Colonic mucosa (tissue), 4 donors: ENCODE measurements at regions of chr18 and their contacts with region 1.

Region 1: GRCh38 chr18:54679318-54680149 is 88.5 kb downstream of the DYNAP start:
- DNase-seq: peak; percentile 25
- H3K4me3 ChIP-seq: no peak overlapping the region
- H3K27ac ChIP-seq: no peak overlapping the region
- H3K4me1 ChIP-seq: no peaks in the 10 kb centered on the region
- H3K27me3 ChIP-seq: no peaks in the 10 kb centered on the region
- CTCF ChIP-seq: peak; percentile 38

Region 2: GRCh38 chr18:54626779-54627178 is 52.8 kb before region 1 on chr18:
- intact Hi-C with region 1: no loop called
- DNase-seq: no peak
- H3K4me3 ChIP-seq: no peak overlapping the region
- H3K27ac ChIP-seq: no peak overlapping the region
- H3K4me1 ChIP-seq: no peaks in the 10 kb centered on the region
- H3K27me3 ChIP-seq: no peaks in the 10 kb centered on the region
- CTCF ChIP-seq: no peak

Region 3: GRCh38 chr18:54880395-54881095 is 201.0 kb after region 1 on chr18:
- intact Hi-C with region 1: no loop called
- DNase-seq: no peak
- H3K4me3 ChIP-seq: no peak overlapping the region
- H3K27ac ChIP-seq: no peak overlapping the region
- H3K4me1 ChIP-seq: no peaks in the 10 kb centered on the region
- H3K27me3 ChIP-seq: no peaks in the 10 kb centered on the region
- CTCF ChIP-seq: no peak

Region 4: DNA sequence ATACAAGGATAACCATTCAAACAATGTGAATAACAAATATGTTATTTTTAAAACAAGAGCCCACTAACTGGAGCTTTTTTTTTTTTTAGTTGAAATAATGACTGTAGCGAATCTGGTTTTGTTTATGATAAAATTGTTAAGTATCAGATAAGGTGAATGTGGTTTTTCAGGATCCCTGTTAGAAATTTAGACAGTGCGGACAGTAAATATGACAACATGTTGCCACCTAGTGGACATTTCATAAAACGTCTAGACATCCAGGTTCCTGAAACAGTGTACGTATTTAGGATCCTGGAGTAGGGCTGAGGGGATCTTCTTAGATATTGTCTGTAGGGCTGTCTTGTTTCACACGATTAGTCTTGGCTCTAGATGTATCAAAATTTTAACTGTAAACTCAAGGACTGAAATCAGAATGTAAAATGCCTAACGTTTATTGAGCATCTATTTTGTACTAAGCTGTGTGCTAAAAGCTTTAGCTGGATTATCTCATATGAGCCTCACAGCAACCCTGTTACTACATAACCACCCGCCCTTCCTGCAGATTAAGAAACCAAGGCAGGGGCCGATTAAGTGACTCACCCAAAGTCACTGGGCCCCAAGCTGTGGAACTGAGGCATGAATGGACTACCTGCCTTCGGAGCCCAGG is 303.6 kb after region 1 on chr18:
- intact Hi-C with region 1: loop called (anchors 1 kb)
- DNase-seq: no peak
- H3K4me3 ChIP-seq: no peak overlapping the region
- H3K27ac ChIP-seq: no peak overlapping the region
- H3K4me1 ChIP-seq: no peaks in the 10 kb centered on the region
- H3K27me3 ChIP-seq: no peaks in the 10 kb centered on the region
- CTCF ChIP-seq: peak; percentile 73